Tibial artery (tissue), 4 donors: ENCODE measurements at regions of chr18 and their contacts with region 1.

Region 1: DNA sequence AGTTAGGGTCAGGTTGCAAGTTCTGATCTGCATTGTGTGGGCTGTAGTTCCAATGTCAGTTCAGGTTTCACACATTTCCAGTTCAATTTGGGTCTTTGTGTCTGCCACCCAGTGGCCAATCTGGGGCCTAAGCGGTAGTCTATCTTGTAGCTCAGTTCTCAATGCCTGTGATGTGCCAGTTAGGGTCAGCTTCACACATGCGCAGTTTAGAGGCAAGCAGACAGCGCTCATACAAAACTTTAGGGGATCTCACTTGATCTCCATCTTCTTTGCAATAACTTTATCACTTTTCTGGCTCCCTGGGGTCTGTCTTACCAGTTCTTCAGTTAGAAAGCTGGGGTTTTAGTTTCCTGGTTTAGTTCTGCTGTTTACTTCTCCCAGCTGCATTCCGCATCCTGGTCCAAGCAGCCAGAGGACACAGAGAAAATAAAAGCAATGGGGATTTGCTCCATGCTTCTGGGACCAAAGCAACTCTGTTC is 11.0 kb upstream of the ZNF24 start:
- DNase-seq: peak; percentile 82 to 87
- H3K4me3 ChIP-seq: peak overlapping the region; percentile 24 to 32
- H3K27ac ChIP-seq: peak overlapping the region; percentile 53 to 62
- H3K4me1 ChIP-seq: no peaks in the 10 kb centered on the region
- H3K27me3 ChIP-seq: no peaks in the 10 kb centered on the region
- CTCF ChIP-seq: peak; percentile 67 to 73

Region 2: GRCh38 chr18:35029770-35030169 is 325.4 kb before region 1 on chr18:
- intact Hi-C with region 1: no loop called
- DNase-seq: no peak
- H3K4me3 ChIP-seq: peak overlapping the region; percentile 14 to 37
- H3K27ac ChIP-seq: peak overlapping the region in 1 of 2 donors; percentile 8
- H3K4me1 ChIP-seq: peaks cover 0 to 45% (median 9%) of the 10 kb centered on the region in 4 donors
- H3K27me3 ChIP-seq: no peaks in the 10 kb centered on the region
- CTCF ChIP-seq: peak in 1 of 2 experiments; percentile 17

Region 3: GRCh38 chr18:35227254-35227653 is 127.9 kb before region 1 on chr18:
- intact Hi-C with region 1: loop called (anchors 5 kb)
- DNase-seq: no peak
- H3K4me3 ChIP-seq: no peak overlapping the region
- H3K27ac ChIP-seq: no peak overlapping the region
- H3K4me1 ChIP-seq: peaks cover 0 to 4% (median 0%) of the 10 kb centered on the region in 4 donors
- H3K27me3 ChIP-seq: no peaks in the 10 kb centered on the region
- CTCF ChIP-seq: no peak

Region 4: GRCh38 chr18:35324926-35325655 is 30.1 kb before region 1 on chr18:
- intact Hi-C with region 1: no loop called
- DNase-seq: no peak
- H3K4me3 ChIP-seq: no peak overlapping the region
- H3K27ac ChIP-seq: no peak overlapping the region
- H3K4me1 ChIP-seq: no peaks in the 10 kb centered on the region
- H3K27me3 ChIP-seq: no peaks in the 10 kb centered on the region
- CTCF ChIP-seq: no peak